Right ventricle myocardium inferior (tissue), 1 donor: ENCODE measurements at regions of chr17 and their contacts with region 1.

Region 1: GRCh38 chr17:67491009-67491680 is 114.1 kb downstream of the PITPNC1 start:
- DNase-seq: peak; percentile 94
- ATAC-seq: peak; percentile 97

Region 2: DNA sequence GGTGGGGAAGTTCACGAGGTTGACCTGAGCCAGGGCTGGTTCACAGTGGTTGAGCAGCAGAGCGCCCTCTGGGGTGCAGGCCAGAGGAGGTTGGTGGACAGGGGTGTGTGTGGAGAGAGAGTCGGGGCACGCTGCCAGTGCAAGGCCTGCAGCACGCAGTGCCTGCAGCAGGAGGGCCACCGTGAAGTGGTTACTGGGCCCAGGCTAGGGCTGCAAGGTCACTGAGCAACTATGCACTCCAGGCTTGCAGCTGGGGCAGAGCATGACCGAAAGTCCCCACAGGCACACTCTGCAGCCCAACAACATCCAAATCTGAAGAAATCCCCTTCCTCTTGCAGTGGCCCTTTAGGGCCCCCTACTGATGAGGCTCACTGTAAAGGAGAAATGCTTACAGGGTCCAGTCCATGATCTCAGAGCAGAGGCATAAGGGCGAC is 137.5 kb after region 1 on chr17:
- intact Hi-C with region 1: no loop called
- DNase-seq: no peak
- ATAC-seq: peak; percentile 70

Region 3: DNA sequence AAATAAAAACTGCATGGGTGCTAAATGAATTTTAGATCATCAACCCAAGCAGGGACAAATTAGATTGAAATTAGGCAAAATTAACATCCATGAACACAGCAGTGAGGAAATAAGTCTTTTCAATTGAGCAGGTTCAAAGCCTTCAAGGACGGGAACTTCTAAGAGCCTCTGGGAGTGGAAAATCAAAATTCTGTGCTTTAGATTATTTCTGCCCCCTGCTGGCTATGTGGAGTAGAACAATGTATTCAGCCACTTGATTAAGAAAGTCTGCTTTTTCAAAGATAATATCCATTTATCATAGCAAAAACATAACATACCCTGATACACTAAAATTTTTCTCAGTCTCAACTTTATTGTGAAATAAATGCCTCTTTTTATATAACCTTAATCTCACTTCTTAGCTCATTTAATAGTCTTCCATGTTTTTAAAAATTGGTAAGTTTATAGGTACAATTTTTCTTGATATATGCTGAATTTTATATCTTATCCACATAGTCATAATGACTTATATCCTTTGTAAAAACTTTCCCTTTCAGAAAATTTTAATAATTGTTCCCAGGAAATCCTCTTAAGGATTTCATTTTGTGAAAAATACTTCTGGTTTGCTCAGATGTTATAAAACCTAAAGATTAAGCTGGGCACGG is 198.5 kb after region 1 on chr17:
- intact Hi-C with region 1: loop called (anchors 10 kb)
- DNase-seq: no peak
- ATAC-seq: peak; percentile 44